ENCODE measurements at regions of chr15 and their contacts with region 1.

Region 1: GRCh38 chr15:70810916-70811578 is 42.9 kb downstream of the LARP6 start:
- DNase-seq: no peak
- ATAC-seq: no peak
- H3K4me3 ChIP-seq: no peak overlapping the region
- H3K27ac ChIP-seq: no peak overlapping the region
- H3K4me1 ChIP-seq: no peaks in the 10 kb centered on the region
- H3K27me3 ChIP-seq: no peaks in the 10 kb centered on the region
- CTCF ChIP-seq: no peak
- EP300 ChIP-seq: no peak
- POLR2A ChIP-seq: no peak
- RAD21 ChIP-seq: no peak

Region 2: GRCh38 chr15:70679919-70680231 is 131.2 kb before region 1 on chr15:
- CTCF ChIA-PET with region 1: no interaction called
- POLR2A ChIA-PET with region 1: no interaction called
- in situ Hi-C with region 1: no loop called
- intact Hi-C with region 1: loop called (anchors 2 kb)
- DNase-seq: no peak
- ATAC-seq: no peak
- H3K4me3 ChIP-seq: no peak overlapping the region
- H3K27ac ChIP-seq: no peak overlapping the region
- H3K4me1 ChIP-seq: no peaks in the 10 kb centered on the region
- H3K27me3 ChIP-seq: 0 out of 5 replicates have a peak, but pooled peaks cover 0 to 5% of the 10 kb centered on the region in 2 experiments
- CTCF ChIP-seq: no peak
- EP300 ChIP-seq: no peak
- POLR2A ChIP-seq: no peak
- RAD21 ChIP-seq: no peak

Region 3: GRCh38 chr15:71252044-71252906 is 441.2 kb after region 1 on chr15:
- CTCF ChIA-PET with region 1: no interaction called
- POLR2A ChIA-PET with region 1: no interaction called
- in situ Hi-C with region 1: no loop called
- intact Hi-C with region 1: no loop called
- DNase-seq: peak in 1 of 4 experiments; percentile 7
- ATAC-seq: peak; percentile 35; the same call in 1 of the 3 replicates
- H3K4me3 ChIP-seq: no peak overlapping the region
- H3K27ac ChIP-seq: no peak overlapping the region
- H3K4me1 ChIP-seq: no peaks in the 10 kb centered on the region
- H3K27me3 ChIP-seq: no peaks in the 10 kb centered on the region; a peak in 1 of 5 replicates
- CTCF ChIP-seq: no peak
- EP300 ChIP-seq: no peak
- POLR2A ChIP-seq: no peak
- RAD21 ChIP-seq: no peak

Measured in K562 (cell line).